ENCODE measurements at regions of chr12 and their contacts with region 1.

Region 1: GRCh38 chr12:123580772-123581171 is 3.6 kb upstream of the TMED2 start:
- DNase-seq: no peak
- H3K4me3 ChIP-seq: no peak overlapping the region
- H3K27ac ChIP-seq: no peak overlapping the region
- H3K4me1 ChIP-seq: peaks cover 11% of the 10 kb centered on the region
- H3K27me3 ChIP-seq: no peaks in the 10 kb centered on the region
- CTCF ChIP-seq: no peak

Region 2: GRCh38 chr12:123337070-123337469 is 243.7 kb before region 1 on chr12:
- CTCF ChIA-PET with region 1: no interaction called
- dilution Hi-C with region 1: no loop called
- in situ Hi-C with region 1: no loop called
- intact Hi-C with region 1: no loop called
- DNase-seq: no peak
- H3K4me3 ChIP-seq: no peak overlapping the region
- H3K27ac ChIP-seq: no peak overlapping the region
- H3K4me1 ChIP-seq: no peaks in the 10 kb centered on the region
- H3K27me3 ChIP-seq: no peaks in the 10 kb centered on the region
- CTCF ChIP-seq: no peak

Region 3: GRCh38 chr12:123388177-123388947 is 192.4 kb before region 1 on chr12:
- CTCF ChIA-PET with region 1: no interaction called
- dilution Hi-C with region 1: no loop called
- in situ Hi-C with region 1: no loop called
- intact Hi-C with region 1: loop called (anchors 1 kb)
- DNase-seq: peak; percentile 62
- H3K4me3 ChIP-seq: peak overlapping the region; percentile 46 to 65 (median 62)
- H3K27ac ChIP-seq: no peak overlapping the region
- H3K4me1 ChIP-seq: peaks cover 30% of the 10 kb centered on the region
- H3K27me3 ChIP-seq: no peaks in the 10 kb centered on the region
- CTCF ChIP-seq: no peak

Region 4: DNA sequence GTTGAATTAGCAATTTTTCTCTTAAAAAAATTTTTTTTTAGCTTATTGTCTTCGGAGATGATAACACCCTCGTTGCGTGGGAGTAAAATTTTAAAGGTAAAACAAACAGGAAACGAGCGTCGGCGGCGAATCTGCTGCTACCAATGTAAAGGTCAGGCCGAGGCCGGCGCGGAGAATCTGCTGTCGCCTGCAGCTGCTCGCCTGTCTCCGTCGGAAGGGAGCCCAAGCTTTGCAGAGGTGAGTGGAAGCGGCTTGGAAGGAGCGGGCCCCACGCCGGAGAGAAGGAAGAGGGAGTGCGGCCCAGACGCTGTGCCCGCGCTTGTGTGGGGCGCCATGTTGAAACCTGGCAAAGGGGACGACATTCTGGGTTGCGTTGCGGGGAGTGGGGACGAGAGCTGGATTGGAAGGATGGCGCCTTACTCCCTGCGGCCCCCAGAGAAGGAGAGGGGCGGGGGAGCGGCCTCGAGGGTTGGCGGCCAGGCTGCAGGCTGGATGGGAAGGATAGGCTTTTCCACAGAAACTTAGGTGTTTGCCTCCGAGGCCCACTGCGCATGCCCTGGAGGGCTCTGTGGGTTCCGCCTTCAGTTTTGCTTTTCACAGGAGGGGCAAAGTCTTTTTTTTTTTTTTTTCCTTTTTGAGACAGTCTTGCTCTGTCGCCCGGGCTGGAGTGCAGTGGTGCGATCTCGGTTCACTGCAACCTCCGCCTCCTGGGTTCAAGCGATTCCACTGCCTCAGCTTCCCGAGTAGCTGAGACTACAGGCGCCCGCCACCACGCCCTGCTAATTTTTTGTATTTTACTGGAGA is 122.6 kb before region 1 on chr12 and contains the start of gene SNRNP35:
- CTCF ChIA-PET with region 1: no interaction called
- dilution Hi-C with region 1: no loop called
- in situ Hi-C with region 1: no loop called
- intact Hi-C with region 1: loop called (anchors 2 kb)
- DNase-seq: peak; percentile 81
- H3K4me3 ChIP-seq: peak within 1 kb of the TSS; percentile 64 to 94 (median 73)
- H3K27ac ChIP-seq: peak within 1 kb of the TSS; percentile 91
- H3K4me1 ChIP-seq: no peaks in the 10 kb centered on the region
- H3K27me3 ChIP-seq: no peaks in the 10 kb centered on the region
- CTCF ChIP-seq: no peak
- total RNA-seq, gene SNRNP35: 9.7 to 22.8 TPM

Region 5: DNA sequence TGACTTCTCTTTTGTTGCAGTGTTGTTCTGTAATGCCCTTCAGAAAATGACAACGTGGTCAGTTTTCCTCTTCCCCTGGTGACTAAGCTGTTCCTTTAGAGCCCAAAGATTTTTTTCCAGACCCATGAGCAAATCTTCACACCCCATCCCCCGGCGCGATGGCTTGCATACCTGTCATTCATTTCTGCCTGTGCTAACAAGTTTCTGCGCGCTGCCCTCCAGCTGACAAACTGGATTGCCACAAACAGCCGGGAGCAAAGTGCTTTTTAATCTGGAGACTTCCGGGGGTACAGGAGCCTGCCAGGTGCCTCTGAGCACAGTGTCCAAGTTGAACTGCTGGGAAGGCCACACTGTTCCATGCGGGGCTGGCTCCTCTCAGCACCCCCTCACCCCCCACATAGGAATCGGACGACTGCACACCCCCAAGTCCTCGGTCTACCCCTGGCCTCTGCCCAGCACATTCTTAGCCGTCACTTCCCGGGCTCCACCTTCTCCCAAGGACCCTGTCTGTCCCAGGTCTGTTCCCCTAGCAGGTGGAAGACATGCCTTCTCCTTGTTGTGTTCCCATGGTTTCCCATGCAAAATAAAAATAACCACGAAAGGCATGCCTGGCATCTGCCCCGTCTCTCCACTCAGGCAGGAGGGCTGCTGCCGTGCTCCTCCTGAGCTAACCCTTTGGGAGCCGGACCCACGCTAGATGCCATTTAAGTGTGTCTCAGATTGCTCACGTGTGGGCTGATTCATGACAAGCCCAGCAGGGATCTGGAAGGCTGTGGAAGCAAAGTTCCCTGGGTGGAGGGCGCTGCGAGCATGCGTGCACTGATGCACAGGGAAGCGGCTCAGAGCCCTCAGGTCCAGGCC is 61.4 kb before region 1 on chr12:
- CTCF ChIA-PET with region 1: no interaction called
- dilution Hi-C with region 1: no loop called
- in situ Hi-C with region 1: no loop called
- intact Hi-C with region 1: loop called (anchors 5 kb)
- DNase-seq: peak; percentile 94
- H3K4me3 ChIP-seq: peak overlapping the region in 1 of 3 experiments; percentile 0
- H3K27ac ChIP-seq: peak overlapping the region; percentile 69
- H3K4me1 ChIP-seq: peaks cover 17% of the 10 kb centered on the region
- H3K27me3 ChIP-seq: no peaks in the 10 kb centered on the region
- CTCF ChIP-seq: no peak

Region 6: DNA sequence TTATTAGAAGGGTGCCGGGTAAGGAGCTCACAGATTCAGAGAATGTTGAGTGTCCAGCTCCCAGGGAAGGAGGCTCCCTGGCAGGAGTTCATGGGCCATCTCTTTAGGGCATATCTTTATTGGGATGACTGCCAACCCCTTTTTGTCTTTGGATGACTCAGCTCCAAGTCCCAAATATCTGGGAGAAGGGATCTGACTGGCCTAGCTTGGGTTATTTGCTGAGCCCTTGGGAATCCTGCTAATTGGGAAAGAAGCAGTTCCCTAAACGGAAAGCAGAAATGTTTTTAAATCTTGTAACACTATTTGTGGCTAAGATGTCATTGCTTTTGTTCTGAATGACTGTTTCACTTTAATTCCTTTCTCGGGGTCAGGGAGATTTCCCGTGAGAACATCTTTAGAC is 33.8 kb after region 1 on chr12:
- CTCF ChIA-PET with region 1: no interaction called
- dilution Hi-C with region 1: no loop called
- in situ Hi-C with region 1: no loop called
- intact Hi-C with region 1: no loop called
- DNase-seq: peak; percentile 11
- H3K4me3 ChIP-seq: no peak overlapping the region
- H3K27ac ChIP-seq: no peak overlapping the region
- H3K4me1 ChIP-seq: no peaks in the 10 kb centered on the region
- H3K27me3 ChIP-seq: no peaks in the 10 kb centered on the region
- CTCF ChIP-seq: no peak

Measured in mammary epithelial cell (primary cell).